CD4-positive, alpha-beta memory T cell (primary cell): ENCODE measurements at regions of chr1 and their contacts with region 1.

Region 1: DNA sequence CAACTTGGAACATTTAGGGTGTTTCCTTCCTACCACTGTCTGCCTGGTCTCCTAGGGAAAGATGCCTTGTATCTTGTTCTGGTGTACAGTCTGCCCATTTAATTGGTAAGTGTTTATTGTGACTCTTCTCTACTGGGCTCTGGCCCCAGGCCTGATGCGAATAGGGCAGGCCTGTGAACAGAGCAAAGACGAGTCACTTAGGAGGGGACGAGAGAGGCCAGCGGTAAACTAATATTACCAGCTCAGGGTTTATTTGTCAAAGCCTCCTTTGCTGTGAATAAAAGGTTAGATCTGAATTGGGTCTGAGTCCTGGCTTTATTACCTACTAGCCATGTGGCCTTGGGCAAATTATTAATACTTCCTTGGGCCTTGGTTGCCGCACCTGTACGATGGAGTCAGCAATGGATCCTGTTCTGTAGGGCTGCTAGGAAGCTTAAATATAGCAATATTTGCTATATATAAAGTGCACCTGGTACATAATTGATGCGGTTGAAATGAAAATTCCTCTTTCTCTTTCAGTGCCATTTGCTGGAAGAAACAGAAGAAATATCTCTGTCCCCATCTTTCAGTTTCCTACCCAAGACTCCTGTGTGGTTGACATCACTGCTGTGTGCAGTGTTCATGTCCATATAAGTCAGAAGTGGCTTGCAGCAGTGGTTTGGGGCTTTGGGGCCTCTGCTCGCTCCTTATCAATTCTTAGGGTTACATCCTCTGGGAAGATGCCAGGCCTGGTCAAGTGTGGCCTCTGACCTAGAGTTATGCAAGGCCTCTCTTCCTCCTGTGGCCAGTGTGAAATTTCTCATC is 32.4 kb downstream of the MAPKAPK2 start:
- DNase-seq: peak; percentile 21 to 59 (median 33)
- H3K4me3 ChIP-seq: no peak overlapping the region
- H3K4me3 Mint-ChIP-seq: peak overlapping the region; percentile 57 to 83 (median 73)
- H3K27ac ChIP-seq: peak overlapping the region; percentile 34
- H3K27ac Mint-ChIP-seq: peak overlapping the region; percentile 87 to 97 (median 95)
- H3K4me1 ChIP-seq: peaks cover 86% of the 10 kb centered on the region
- H3K4me1 Mint-ChIP-seq: peaks cover 68 to 90% (median 81%) of the 10 kb centered on the region in 4 donors
- H3K27me3 ChIP-seq: no peaks in the 10 kb centered on the region
- H3K27me3 Mint-ChIP-seq: no peaks in the 10 kb centered on the region

Region 2: GRCh38 chr1:206684478-206685333 is 32.4 kb before region 1 on chr1 and contains the start of gene MAPKAPK2:
- CTCF ChIA-PET with region 1: interaction called, 3 read pairs
- POLR2A ChIA-PET with region 1: interaction called, 24 read pairs
- intact Hi-C with region 1: loop called (anchors 5 kb)
- DNase-seq: peak; percentile 71 to 77 (median 73)
- H3K4me3 ChIP-seq: peak within 1 kb of the TSS; percentile 55 to 93
- H3K4me3 Mint-ChIP-seq: peak within 1 kb of the TSS; percentile 93 to 100 (median 96)
- H3K27ac ChIP-seq: peak within 1 kb of the TSS; percentile 90
- H3K27ac Mint-ChIP-seq: peak within 1 kb of the TSS; percentile 94 to 98 (median 97)
- H3K4me1 ChIP-seq: peaks cover 45% of the 10 kb centered on the region
- H3K4me1 Mint-ChIP-seq: peaks cover 26 to 52% (median 37%) of the 10 kb centered on the region in 4 donors
- H3K27me3 ChIP-seq: no peaks in the 10 kb centered on the region
- H3K27me3 Mint-ChIP-seq: peaks cover 2 to 3% of the 10 kb centered on the region in 2 donors
- total RNA-seq, gene MAPKAPK2: 71.7 to 72.8 TPM